ENCODE measurements at regions of chr6 and their contacts with region 1.

Region 1: DNA sequence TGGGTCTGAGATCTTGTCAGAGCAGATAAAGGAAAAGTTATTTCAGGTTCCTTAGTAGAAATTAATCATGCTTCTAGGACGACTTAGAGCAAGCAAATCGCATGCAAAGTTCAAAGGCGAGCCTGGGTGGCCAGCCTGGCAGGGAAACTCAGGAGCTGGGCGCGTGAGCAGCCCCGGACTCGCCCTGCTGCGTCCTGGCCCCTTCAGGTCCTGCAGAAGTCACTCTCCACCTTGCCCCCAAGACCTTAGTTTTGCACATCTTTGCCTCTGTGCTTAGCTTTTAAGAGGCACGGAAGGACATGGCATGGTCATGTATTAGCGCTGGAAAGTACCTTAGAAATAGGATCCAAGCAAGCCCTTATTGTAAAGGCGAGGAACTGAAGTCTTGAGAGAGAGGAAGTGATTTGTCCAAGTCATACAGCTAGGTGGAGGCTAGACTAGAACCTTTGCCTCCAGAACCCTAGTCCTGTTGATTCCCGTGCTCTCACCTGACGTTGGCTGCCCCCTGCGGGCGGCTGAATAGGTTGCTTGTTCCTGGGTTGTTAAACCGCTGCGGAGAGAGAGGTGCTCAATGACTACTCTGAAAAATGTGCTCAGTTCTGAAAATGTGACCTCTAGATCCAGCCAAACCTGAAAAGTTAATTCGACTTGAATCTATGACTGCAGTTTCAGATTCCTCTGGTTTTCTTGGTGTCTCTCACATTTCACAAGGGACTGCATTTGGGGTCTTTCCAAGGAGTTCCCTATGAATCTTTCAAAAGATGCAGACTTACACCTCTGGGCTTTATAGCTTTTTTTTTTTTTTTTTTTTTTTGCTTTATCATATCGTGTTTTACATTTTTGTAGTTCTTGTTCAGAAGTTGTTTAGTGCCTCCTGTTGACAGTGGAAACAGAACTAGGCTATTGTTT is 2.7 kb downstream of the MYB start:
- DNase-seq: peak; percentile 59 to 86 (median 69)
- ATAC-seq: peak; percentile 30 to 44
- H3K4me3 Mint-ChIP-seq: peak overlapping the region; percentile 82 to 98 (median 94)
- H3K27ac Mint-ChIP-seq: peak overlapping the region; percentile 75 to 96 (median 91)
- H3K4me1 Mint-ChIP-seq: peaks cover 14 to 30% (median 20%) of the 10 kb centered on the region in 4 donors
- H3K27me3 Mint-ChIP-seq: no peaks in the 10 kb centered on the region

Region 2: DNA sequence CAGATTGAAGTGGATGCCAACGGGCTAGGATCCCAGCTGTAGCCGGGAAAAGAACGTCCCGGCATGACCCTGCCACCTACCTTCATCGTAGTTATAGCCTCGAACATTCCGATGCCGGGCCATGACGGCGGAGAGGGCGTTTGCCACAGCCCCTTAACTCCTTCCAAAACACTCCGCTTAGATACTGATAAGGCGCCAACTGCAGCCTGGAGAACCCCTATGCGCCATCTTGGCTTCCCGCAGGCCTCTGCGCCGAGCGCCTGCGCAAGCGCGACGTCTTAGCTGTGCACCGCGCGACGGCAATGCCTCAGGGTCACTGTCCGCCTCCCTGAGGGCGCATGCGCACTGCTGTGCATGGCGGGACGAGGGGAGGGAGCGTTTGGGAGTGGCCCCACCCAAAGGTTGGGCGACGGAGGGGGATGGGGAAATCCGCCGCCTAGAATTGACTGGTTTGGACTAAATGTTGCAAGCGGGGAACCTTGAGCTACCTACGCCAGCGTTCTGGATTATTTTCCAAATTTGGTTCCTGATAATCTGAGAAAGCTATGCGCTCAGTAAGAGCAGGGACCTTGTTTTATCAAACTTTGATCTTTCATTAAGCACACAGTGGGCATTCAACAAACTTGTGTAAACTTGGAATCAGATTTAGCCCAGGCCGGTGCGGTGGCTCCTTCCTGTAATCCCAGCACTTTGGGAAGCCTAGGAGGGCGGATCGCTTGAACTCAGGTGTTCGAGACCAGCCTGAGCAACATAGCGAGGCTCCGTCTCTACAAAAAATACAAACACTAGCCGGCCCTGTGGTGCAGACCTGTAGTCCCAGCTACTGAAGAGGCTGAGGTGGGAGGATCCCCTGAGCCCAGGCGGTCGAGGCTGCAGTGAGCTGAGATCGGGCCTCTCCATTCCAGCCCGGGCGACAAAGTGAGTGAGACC is 129.0 kb before region 1 on chr6 and contains the start of gene HBS1L:
- POLR2A ChIA-PET with region 1: interaction called, 18 read pairs
- DNase-seq: peak; percentile 90 to 98 (median 96)
- ATAC-seq: peak; percentile 97 to 98
- H3K4me3 Mint-ChIP-seq: peak within 1 kb of the TSS; percentile 90 to 100 (median 98)
- H3K27ac Mint-ChIP-seq: peak within 1 kb of the TSS; percentile 95 to 100 (median 99)
- H3K4me1 Mint-ChIP-seq: peaks cover 24 to 44% (median 38%) of the 10 kb centered on the region in 4 donors
- H3K27me3 Mint-ChIP-seq: no peaks in the 10 kb centered on the region
- polyA plus RNA-seq, gene HBS1L: 71.1 to 78.2 (median 71.9) TPM

Region 3: DNA sequence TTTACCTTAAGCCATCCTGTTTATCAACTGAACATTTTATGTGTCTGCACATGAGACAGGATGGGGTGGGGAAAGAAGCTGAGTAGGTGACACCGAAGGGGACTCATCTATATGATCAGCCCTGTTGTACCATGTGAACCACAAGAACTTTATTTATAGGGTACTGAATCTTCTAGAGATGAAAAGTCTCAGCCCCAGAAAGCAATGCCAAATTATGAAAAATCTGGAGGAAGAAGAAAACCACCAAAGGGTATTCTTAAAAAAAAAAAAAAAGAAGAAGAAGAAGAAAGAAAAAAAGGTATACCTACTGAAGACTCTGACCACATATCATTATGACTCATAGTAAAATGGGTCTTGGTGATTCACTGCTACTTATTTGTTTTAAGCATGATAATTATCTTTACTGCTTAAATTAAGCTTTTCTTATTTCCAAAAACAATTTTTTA is 89.4 kb before region 1 on chr6:
- POLR2A ChIA-PET with region 1: interaction called, 11 read pairs
- DNase-seq: peak; percentile 6 to 83 (median 48)
- ATAC-seq: peak; percentile 94 to 96
- H3K4me3 Mint-ChIP-seq: peak overlapping the region in 9 of 10 donors; percentile 27 to 77 (median 61)
- H3K27ac Mint-ChIP-seq: peak overlapping the region; percentile 81 to 98 (median 90)
- H3K4me1 Mint-ChIP-seq: peaks cover 19 to 70% (median 56%) of the 10 kb centered on the region in 4 donors
- H3K27me3 Mint-ChIP-seq: no peaks in the 10 kb centered on the region

Region 4: DNA sequence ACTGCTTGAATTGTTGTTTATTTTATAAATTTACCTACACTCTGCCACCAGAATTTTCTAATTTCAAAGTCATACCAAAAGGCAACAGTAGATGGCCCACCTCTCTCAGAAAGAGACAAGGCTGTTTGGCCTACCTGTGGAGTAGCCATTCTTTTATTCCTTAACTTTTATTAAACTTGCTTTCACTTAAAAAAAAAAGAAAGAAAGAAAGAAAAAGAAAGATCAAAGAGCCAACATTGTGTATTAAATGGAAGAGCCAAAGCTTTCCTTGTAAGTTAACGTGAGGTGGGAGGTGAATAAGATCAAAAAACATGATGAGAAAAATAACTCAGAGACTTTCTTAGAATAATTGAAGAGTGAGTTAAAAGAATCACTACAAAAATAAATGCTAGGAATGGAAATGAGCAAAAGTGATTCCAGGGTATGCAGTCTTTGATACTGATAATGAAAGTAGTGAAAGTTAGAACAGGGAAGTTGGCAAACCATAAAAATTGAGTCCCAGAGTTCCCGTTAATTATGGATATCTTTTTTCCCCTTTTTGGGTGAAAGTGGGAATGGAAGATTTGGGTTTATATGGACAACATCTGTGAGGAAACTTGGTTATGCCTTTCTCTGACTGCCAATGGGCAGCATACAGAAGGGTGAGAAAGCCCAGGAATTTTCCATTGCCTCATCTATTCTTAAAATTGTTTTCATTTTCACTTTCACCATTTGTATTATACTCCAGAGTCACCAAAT is 38.6 kb before region 1 on chr6:
- POLR2A ChIA-PET with region 1: interaction called, 20 read pairs
- DNase-seq: peak in 5 of 10 donors; percentile 19 to 58 (median 53)
- ATAC-seq: peak; percentile 42 to 61
- H3K4me3 Mint-ChIP-seq: peak overlapping the region in 5 of 10 donors; percentile 2 to 69 (median 26)
- H3K27ac Mint-ChIP-seq: peak overlapping the region in 9 of 10 donors; percentile 0 to 87 (median 54)
- H3K4me1 Mint-ChIP-seq: peaks cover 13 to 52% (median 50%) of the 10 kb centered on the region in 4 donors
- H3K27me3 Mint-ChIP-seq: no peaks in the 10 kb centered on the region

Region 5: DNA sequence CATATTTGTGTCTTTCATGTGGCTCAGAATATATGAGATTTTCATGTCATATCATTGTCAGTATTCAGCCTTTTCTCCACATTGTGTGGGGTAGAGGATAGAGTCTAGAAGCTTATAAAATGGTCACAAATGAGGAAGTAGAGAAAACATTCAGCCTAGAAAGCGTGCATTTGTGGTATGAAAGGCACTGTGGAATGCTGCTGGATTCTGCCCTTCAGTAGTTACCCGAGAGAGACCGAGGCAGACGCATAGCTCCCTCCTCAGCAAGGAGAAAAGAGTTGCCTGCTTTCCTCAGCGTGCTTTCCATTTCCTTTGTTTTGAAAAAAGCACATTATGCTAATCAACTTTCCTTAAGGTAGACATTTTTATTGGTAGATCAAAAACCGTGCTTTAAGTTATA is 26.0 kb after region 1 on chr6:
- POLR2A ChIA-PET with region 1: interaction called, 10 read pairs
- DNase-seq: peak in 4 of 10 donors; percentile 8 to 53 (median 44)
- ATAC-seq: peak; percentile 66 to 77
- H3K4me3 Mint-ChIP-seq: peak overlapping the region; percentile 54 to 90 (median 83)
- H3K27ac Mint-ChIP-seq: peak overlapping the region; percentile 81 to 97 (median 94)
- H3K4me1 Mint-ChIP-seq: peaks cover 18 to 45% (median 41%) of the 10 kb centered on the region in 4 donors
- H3K27me3 Mint-ChIP-seq: no peaks in the 10 kb centered on the region

Measured in naive thymus-derived CD8-positive, alpha-beta T cell (primary cell).